ENCODE measurements at regions of chr5 and their contacts with region 1.

Region 1: DNA sequence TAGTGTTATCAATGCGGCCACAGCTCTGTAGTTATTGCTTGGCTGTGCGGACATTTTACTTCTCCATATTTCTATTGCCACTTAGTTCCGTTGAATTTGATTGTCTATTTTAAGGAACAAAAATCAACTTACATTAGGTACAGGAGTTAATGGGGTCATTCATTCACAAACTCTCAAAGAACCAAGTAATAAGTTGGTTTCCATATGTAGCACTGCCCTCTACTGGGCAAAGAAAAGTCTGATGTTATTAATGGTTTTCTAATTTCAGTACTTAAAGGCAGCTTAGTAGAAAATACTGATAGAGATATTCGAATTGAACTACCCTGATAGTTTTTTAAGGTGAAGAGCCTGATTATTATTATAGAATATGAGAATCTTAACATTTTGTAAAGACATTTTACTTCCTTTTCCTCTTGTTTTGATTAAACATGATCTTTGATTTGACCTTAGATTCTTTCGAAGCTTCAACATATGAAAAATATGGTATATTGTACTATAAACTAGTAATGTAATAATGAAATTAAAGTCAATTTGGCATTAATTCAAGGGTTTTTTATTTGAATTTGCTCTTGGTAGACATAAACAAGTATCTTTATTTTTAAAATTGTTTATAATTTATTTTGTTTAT is 119.5 kb upstream of the CTNND2 start:
- DNase-seq: peak in 1 of 9 donors; percentile 2
- ATAC-seq: no peak
- H3K4me3 ChIP-seq: no peak overlapping the region
- H3K4me3 Mint-ChIP-seq: no peak overlapping the region
- H3K27ac ChIP-seq: no peak overlapping the region
- H3K27ac Mint-ChIP-seq: no peak overlapping the region
- H3K4me1 ChIP-seq: no peaks in the 10 kb centered on the region
- H3K4me1 Mint-ChIP-seq: no peaks in the 10 kb centered on the region
- H3K27me3 ChIP-seq: no peaks in the 10 kb centered on the region
- H3K27me3 Mint-ChIP-seq: no peaks in the 10 kb centered on the region

Region 2: DNA sequence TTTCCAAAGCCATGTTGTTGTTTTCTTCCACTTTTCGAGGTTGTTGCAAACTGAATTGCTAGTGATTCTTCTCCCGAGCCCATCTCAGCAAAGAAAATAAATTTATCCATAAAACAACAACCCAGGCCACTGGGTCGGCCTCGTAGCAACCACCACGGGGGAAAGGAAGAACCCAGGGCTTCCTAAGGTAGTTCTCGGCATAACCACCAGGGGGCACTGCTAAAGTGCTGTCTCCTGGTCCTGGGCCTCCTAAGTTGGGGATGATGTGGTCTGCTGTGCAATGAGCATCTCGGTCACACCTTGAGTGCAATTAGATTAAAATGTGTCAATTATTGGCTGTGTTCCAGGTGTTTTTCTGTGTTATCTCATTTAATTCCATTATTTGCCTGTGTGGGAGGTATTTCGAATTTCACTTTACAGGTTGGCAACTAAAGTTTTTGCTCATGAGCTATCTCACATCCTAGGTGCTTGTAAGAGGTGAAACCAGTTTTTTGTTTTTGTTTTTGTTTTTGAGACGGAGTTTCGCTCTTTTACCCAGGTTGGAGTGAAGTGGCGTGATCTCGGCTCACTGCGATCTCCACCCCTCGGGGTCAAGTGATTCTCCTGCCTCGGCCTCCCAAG is 1159.9 kb before region 1 on chr5:
- CTCF ChIA-PET with region 1: no interaction called
- POLR2A ChIA-PET with region 1: no interaction called
- intact Hi-C with region 1: loop called (anchors 5 kb)
- DNase-seq: peak in 7 of 9 donors; percentile 16 to 60 (median 31)
- ATAC-seq: peak; percentile 80
- H3K4me3 ChIP-seq: no peak overlapping the region
- H3K4me3 Mint-ChIP-seq: no peak overlapping the region
- H3K27ac ChIP-seq: no peak overlapping the region
- H3K27ac Mint-ChIP-seq: no peak overlapping the region
- H3K4me1 ChIP-seq: no peaks in the 10 kb centered on the region
- H3K4me1 Mint-ChIP-seq: peaks cover 0 to 4% (median 0%) of the 10 kb centered on the region in 7 donors
- H3K27me3 ChIP-seq: peaks cover 0 to 3% of the 10 kb centered on the region in 2 donors
- H3K27me3 Mint-ChIP-seq: peaks cover 0 to 23% (median 12%) of the 10 kb centered on the region in 5 donors

Region 3: DNA sequence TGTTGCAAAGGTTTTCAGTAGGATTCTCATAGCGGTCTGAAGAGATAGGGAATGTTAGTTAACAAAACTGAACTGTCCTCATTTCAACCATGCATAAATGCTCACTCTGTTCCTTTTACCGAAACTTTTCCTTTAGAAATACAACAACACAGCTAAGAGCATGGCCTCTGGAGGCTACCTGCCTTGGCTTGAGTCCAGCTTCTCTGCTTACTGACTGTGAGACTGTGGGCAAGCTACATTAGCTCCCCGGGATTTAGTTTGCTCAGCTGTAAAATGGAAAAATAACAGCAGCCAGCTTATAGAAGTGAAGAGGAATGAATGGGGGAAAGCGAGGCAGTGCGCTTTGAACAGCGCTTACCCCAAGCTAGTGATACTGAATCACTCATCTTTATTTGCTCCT is 754.8 kb before region 1 on chr5:
- CTCF ChIA-PET with region 1: no interaction called
- POLR2A ChIA-PET with region 1: no interaction called
- intact Hi-C with region 1: loop called in 1 of 2 experiments (anchors 5 kb)
- DNase-seq: no peak
- ATAC-seq: no peak
- H3K4me3 ChIP-seq: no peak overlapping the region
- H3K4me3 Mint-ChIP-seq: no peak overlapping the region
- H3K27ac ChIP-seq: no peak overlapping the region
- H3K27ac Mint-ChIP-seq: no peak overlapping the region
- H3K4me1 ChIP-seq: no peaks in the 10 kb centered on the region
- H3K4me1 Mint-ChIP-seq: no peaks in the 10 kb centered on the region
- H3K27me3 ChIP-seq: no peaks in the 10 kb centered on the region
- H3K27me3 Mint-ChIP-seq: peaks cover 0 to 22% (median 6%) of the 10 kb centered on the region in 5 donors

Measured in naive thymus-derived CD4-positive, alpha-beta T cell (primary cell).